ENCODE measurements at regions of chr11 and their contacts with region 1.

Region 1: GRCh38 chr11:130213143-130213978 is 53.8 kb downstream of the ST14 start:
- DNase-seq: no peak
- ATAC-seq: peak; percentile 95
- H3K4me3 ChIP-seq: no peak overlapping the region
- H3K27ac ChIP-seq: no peak overlapping the region
- H3K4me1 ChIP-seq: no peaks in the 10 kb centered on the region
- H3K27me3 ChIP-seq: no peaks in the 10 kb centered on the region
- CTCF ChIP-seq: peak; percentile 92 to 94 (median 94); a peak in 5 of 6 replicates
- EP300 ChIP-seq: no peak
- POLR2A ChIP-seq: no peak
- RAD21 ChIP-seq: peak; percentile 97

Region 2: GRCh38 chr11:130223291-130223971 is 10.1 kb after region 1 on chr11:
- CTCF ChIA-PET with region 1: interaction called, 15 read pairs
- POLR2A ChIA-PET with region 1: no interaction called
- RAD21 ChIA-PET with region 1: interaction called, 4 read pairs
- SMC1A ChIA-PET with region 1: interaction called, 6 read pairs
- in situ Hi-C with region 1: no loop called
- intact Hi-C with region 1: no loop called
- DNase-seq: no peak
- ATAC-seq: no peak
- H3K4me3 ChIP-seq: no peak overlapping the region
- H3K27ac ChIP-seq: no peak overlapping the region
- H3K4me1 ChIP-seq: no peaks in the 10 kb centered on the region
- H3K27me3 ChIP-seq: no peaks in the 10 kb centered on the region
- CTCF ChIP-seq: no peak
- EP300 ChIP-seq: no peak
- POLR2A ChIP-seq: no peak
- RAD21 ChIP-seq: no peak

Region 3: DNA sequence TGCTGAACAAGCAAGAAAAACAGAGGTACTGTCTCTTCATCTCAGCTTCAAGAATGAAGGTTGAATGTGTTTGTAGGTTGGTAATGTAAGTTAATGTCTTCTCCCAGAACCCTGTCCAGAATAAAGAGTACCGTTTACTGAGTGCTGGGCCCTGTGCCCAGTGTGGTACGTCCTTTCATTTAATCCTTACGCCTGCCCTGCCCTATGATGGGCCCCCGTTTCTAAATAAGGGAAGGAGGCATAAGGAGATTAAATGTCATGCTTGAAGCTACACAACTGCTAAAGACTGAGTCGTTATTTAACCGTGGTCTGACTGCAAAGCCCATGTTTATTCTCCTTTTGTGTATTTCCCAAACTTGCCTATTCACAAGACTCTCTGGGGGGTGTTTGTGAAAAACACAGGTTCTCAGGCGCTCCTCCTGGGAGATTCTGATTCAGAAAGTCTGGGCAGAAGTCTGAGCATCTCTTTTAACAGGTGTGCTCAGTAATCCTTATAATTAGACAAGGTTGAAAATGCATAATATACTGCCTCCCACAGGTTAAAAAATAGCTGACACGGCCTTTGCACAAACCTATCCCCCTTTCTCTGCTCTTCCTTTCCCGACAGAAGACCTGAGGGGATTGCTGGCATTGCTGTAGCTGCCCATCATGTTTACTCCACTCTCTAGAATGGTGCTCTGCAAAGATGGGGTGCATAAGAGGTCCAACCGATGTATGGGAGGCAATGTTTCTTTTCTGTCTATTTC is 157.7 kb after region 1 on chr11:
- CTCF ChIA-PET with region 1: interaction called, 72 read pairs
- POLR2A ChIA-PET with region 1: no interaction called
- RAD21 ChIA-PET with region 1: interaction called, 43 read pairs
- SMC1A ChIA-PET with region 1: interaction called, 34 read pairs
- in situ Hi-C with region 1: no loop called
- intact Hi-C with region 1: loop called (anchors 1 kb)
- DNase-seq: no peak
- ATAC-seq: peak; percentile 67
- H3K4me3 ChIP-seq: no peak overlapping the region
- H3K27ac ChIP-seq: no peak overlapping the region
- H3K4me1 ChIP-seq: no peaks in the 10 kb centered on the region
- H3K27me3 ChIP-seq: peaks cover 0 to 6% of the 10 kb centered on the region in 2 experiments; a peak in 2 of 4 replicates
- CTCF ChIP-seq: peak; percentile 17 to 39 (median 28); a peak in 4 of 6 replicates
- EP300 ChIP-seq: no peak
- POLR2A ChIP-seq: no peak
- RAD21 ChIP-seq: 0 out of 2 replicates have a peak, but pooled peaks have one; percentile 27

Region 4: GRCh38 chr11:130427581-130428315 is 214.4 kb after region 1 on chr11:
- CTCF ChIA-PET with region 1: interaction called, 50 read pairs
- POLR2A ChIA-PET with region 1: no interaction called
- RAD21 ChIA-PET with region 1: interaction called, 21 read pairs
- SMC1A ChIA-PET with region 1: interaction called, 43 read pairs
- in situ Hi-C with region 1: loop called (anchors 10 kb)
- intact Hi-C with region 1: loop called (anchors 1 kb)
- DNase-seq: no peak
- ATAC-seq: no peak
- H3K4me3 ChIP-seq: no peak overlapping the region
- H3K27ac ChIP-seq: no peak overlapping the region
- H3K4me1 ChIP-seq: no peaks in the 10 kb centered on the region
- H3K27me3 ChIP-seq: peaks cover 15% of the 10 kb centered on the region in 2 experiments
- CTCF ChIP-seq: no peak
- EP300 ChIP-seq: no peak
- POLR2A ChIP-seq: no peak
- RAD21 ChIP-seq: no peak

Region 5: GRCh38 chr11:130469181-130469580 is 255.8 kb after region 1 on chr11:
- CTCF ChIA-PET with region 1: no interaction called
- POLR2A ChIA-PET with region 1: no interaction called
- RAD21 ChIA-PET with region 1: no interaction called
- SMC1A ChIA-PET with region 1: no interaction called
- in situ Hi-C with region 1: no loop called
- intact Hi-C with region 1: no loop called
- DNase-seq: no peak
- ATAC-seq: no peak
- H3K4me3 ChIP-seq: no peak overlapping the region
- H3K27ac ChIP-seq: no peak overlapping the region
- H3K4me1 ChIP-seq: no peaks in the 10 kb centered on the region
- H3K27me3 ChIP-seq: no peaks in the 10 kb centered on the region; a peak in 1 of 4 replicates
- CTCF ChIP-seq: no peak
- EP300 ChIP-seq: no peak
- POLR2A ChIP-seq: no peak
- RAD21 ChIP-seq: no peak